ENCODE measurements at regions of chr4 and their contacts with region 1.

Region 1: DNA sequence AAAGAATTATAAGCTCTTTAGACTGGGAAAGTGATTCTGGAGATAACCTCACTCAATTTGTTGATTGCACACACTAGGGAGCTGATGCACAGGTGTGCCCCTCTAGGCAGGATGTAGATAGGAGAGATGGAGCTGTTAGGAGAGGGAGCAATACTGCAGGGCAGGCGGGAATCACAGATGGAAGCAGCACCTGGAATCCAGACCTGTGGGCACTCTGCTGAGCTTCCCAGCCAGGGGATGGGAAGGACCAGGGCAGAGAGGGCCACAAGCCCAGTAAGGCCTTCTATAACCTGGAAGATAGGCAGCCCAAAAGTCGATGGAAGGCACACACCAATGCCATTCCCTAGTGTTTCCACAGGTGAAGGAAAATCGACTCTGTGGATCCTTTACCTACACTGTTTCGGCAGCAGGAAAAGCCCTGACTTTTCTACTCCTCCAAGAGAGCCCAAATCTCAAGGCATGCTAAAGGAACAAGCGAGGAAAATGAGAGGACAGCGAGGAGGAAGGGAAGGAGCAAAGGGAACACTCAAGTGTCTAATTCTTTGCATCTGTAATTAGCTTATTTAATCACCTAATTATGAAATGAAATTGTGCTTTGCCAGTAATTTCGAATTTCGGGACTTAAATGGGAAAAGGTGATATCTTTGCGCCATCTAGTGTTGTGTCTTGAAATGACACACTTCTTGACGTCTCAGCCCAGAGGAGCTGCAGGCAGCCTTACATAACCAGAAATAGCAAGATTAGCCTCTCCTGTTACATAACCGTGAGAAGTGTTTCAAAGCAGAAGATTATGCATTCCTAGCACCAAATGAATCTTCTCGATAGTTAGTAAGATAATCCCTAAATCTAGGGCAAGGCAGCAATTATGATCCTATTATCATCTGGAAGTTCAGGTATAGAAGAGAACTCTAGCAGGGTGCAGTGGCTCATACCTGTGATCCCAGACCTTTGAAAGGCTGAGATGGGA is 31.0 kb upstream of the TLR3 start:
- DNase-seq: peak in 1 of 2 donors; percentile 54
- H3K4me3 ChIP-seq: no peak overlapping the region
- CTCF ChIP-seq: no peak
- POLR2A ChIP-seq: no peak

Region 2: DNA sequence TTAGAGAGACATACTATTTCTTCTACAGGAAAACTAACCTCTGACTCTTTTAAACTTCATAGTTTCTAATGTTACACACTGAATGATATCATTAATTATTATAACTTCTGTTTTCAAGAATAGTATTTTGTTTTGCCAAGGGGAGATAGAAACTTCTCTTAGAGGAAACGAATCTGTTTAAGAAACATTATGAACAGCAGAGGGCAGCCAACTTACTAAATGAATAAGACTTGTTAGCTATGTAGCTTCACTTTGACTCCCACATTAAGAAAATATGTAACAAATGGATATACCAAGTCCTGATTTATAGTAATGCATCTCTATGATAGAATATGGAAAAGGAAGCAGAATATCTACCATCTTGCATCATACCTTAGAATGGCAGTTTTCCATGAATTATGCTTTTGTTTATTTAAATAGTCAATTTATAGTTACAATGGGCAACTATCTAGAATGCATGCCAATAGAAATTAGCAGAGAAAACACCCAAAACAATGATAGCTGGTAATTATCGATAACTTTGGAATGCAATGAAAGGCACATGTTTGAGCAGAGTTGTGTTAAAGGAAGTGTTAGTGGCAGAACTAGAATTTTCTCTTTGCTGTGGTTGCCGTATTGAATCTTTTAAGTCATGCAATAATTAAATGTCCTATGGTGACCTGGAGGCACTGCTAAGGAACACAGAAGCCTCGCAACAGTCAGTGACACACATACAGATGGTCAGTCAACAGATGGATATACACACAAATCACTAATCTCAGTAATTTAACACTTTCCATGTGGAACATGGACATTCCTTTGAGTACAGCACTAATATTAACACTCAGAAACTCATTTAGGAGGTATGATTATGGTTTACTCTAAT is 396.9 kb before region 1 on chr4:
- intact Hi-C with region 1: loop called (anchors 5 kb)
- DNase-seq: no peak
- H3K4me3 ChIP-seq: no peak overlapping the region
- CTCF ChIP-seq: no peak
- POLR2A ChIP-seq: no peak

Region 3: GRCh38 chr4:185833055-185833598 is 204.8 kb before region 1 on chr4:
- intact Hi-C with region 1: no loop called
- DNase-seq: no peak
- H3K4me3 ChIP-seq: no peak overlapping the region
- CTCF ChIP-seq: no peak
- POLR2A ChIP-seq: no peak

Region 4: GRCh38 chr4:186191200-186192065 is 153.5 kb after region 1 on chr4 and contains the start of gene CYP4V2:
- intact Hi-C with region 1: no loop called
- DNase-seq: peak; percentile 60 to 95
- H3K4me3 ChIP-seq: peak within 1 kb of the TSS; percentile 81
- CTCF ChIP-seq: no peak
- POLR2A ChIP-seq: no peak
- total RNA-seq, gene CYP4V2: 4.3 to 14.7 (median 4.8) TPM